AG04450 (cell line): ENCODE measurements at regions of chr16 and their contacts with region 1.

Region 1: DNA sequence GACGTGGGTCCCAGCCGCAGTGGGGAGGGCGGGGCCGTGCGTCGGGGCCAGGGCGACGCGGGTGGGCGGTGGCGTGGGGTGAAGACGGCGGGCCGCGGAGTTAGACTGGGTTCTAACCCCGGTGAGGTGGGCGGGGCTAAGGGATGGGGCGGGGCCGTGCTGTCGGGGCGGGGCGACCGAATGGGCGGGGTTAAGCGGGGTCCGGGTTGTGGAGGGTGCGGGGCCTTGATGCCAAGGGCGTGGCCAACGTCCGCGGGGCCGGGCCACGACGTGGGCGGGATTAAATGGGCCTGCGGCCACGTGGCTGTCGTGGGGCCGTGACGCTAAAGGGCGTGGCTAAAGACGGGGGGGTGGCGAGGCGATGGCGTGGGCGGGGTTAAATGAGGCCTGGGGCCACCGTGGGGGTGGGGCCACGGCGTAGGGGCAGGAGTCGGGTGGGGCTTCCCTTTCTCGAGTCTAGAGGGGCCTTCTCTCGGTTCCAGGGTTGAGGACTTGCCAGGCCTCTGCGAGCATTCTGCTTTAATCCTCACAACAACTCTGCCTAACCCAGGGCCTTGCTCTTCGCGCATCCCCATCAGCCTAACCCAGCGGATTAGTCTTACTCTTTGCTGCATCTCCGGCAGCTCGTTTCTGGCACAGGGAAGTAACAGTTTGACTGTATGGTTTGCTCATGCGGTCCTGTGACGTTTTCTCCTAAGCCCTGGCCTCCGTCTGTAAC is 739 bp downstream of the TCF25 start:
- DNase-seq: peak; percentile 94
- H3K4me3 ChIP-seq: peak overlapping the region; percentile 92
- H3K27ac ChIP-seq: peak overlapping the region; percentile 73
- H3K27me3 ChIP-seq: no peaks in the 10 kb centered on the region
- CTCF ChIP-seq: no peak

Region 2: GRCh38 chr16:89599451-89599858 is 274.7 kb before region 1 on chr16:
- CTCF ChIA-PET with region 1: no interaction called
- POLR2A ChIA-PET with region 1: no interaction called
- DNase-seq: no peak
- H3K4me3 ChIP-seq: no peak overlapping the region
- H3K27ac ChIP-seq: no peak overlapping the region
- H3K27me3 ChIP-seq: no peaks in the 10 kb centered on the region
- CTCF ChIP-seq: peak; percentile 13; the same call in 1 of the 2 replicates

Region 3: GRCh38 chr16:89972244-89973234 is 98.4 kb after region 1 on chr16:
- CTCF ChIA-PET with region 1: no interaction called
- POLR2A ChIA-PET with region 1: interaction called, 14 read pairs
- DNase-seq: peak; percentile 61
- H3K4me3 ChIP-seq: peak overlapping the region; percentile 97
- H3K27ac ChIP-seq: peak overlapping the region; percentile 77
- H3K27me3 ChIP-seq: no peaks in the 10 kb centered on the region
- CTCF ChIP-seq: no peak